ENCODE measurements at regions of chr1 and their contacts with region 1.

Region 1: GRCh38 chr1:90579212-90579802 is 137.8 kb downstream of the BARHL2 start:
- ATAC-seq: peak in 5 of 8 experiments; percentile 46 to 75 (median 55)
- H3K4me3 ChIP-seq: no peak overlapping the region
- H3K27ac ChIP-seq: no peak overlapping the region
- H3K4me1 ChIP-seq: no peaks in the 10 kb centered on the region

Region 2: DNA sequence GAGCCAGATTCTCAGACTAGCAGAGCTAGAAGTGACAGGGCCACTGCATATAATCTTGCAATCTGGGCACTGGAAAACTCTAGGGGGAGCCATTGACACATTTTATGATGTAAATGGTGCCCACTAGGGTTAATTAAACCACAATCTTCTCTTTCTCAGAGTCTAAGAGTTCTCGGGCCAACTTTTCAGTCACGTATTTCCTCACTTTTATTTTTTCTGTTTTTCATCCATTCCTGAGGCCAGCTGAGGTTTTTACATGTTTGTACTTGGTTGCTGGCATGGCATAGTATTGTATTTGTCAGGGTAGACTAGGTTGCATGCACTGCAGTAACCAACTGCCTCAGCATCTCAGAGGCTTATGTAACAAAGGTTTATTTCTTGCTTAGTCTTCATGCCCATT is 446.2 kb before region 1 on chr1:
- in situ Hi-C with region 1: loop called in 1 of 9 experiments (anchors 25 kb)
- ATAC-seq: peak; percentile 41 to 94 (median 72)
- H3K4me3 ChIP-seq: no peak overlapping the region
- H3K27ac ChIP-seq: no peak overlapping the region
- H3K4me1 ChIP-seq: peaks cover 0 to 21% of the 10 kb centered on the region in 2 donors

Region 3: GRCh38 chr1:90902672-90903071 is 323.4 kb after region 1 on chr1:
- in situ Hi-C with region 1: no loop called
- ATAC-seq: no peak
- H3K4me3 ChIP-seq: no peak overlapping the region
- H3K27ac ChIP-seq: no peak overlapping the region
- H3K4me1 ChIP-seq: no peaks in the 10 kb centered on the region

Region 4: DNA sequence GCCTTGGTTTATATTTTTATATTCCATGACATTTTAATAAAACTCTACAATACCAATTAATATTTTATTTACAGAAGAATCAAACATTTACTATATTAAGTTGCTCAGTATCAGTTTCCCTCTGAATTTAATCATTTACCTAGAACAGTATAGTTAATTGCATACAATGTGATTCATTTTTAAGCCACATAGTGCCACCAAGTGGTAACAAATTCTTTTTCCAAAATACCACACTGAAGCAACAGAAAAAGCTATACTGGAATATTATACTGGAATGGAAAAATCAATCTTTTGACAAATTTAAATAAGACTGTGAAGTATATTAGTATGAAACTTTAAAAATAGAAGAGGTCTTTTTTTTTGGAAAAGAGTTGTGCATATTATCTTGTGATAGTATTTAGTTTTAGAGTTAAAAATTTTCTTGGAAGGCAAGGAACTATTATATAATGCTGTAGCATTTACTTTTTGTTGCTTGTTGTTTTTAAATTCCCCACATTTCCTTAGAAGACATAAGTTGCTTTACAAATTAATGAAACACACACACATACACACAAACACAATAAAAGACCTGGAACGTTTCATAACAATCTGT is 385.2 kb after region 1 on chr1:
- in situ Hi-C with region 1: loop called in 1 of 9 experiments (anchors 25 kb)
- ATAC-seq: peak in 3 of 8 experiments; percentile 33 to 57 (median 42)
- H3K4me3 ChIP-seq: no peak overlapping the region
- H3K27ac ChIP-seq: no peak overlapping the region
- H3K4me1 ChIP-seq: no peaks in the 10 kb centered on the region

Region 5: GRCh38 chr1:91412371-91412770 is 833.1 kb after region 1 on chr1:
- in situ Hi-C with region 1: no loop called
- ATAC-seq: no peak
- H3K4me3 ChIP-seq: no peak overlapping the region
- H3K27ac ChIP-seq: no peak overlapping the region
- H3K4me1 ChIP-seq: no peaks in the 10 kb centered on the region

Measured in motor neuron (in vitro differentiated cells).